OCI-LY7 (cell line): ENCODE measurements at regions of chr1 and their contacts with region 1.

Region 1: GRCh38 chr1:46254668-46255067 is 7.1 kb downstream of the RAD54L start:
- DNase-seq: no peak
- H3K4me3 ChIP-seq: no peak overlapping the region
- H3K27ac ChIP-seq: no peak overlapping the region
- H3K4me1 ChIP-seq: peaks cover 2% of the 10 kb centered on the region
- CTCF ChIP-seq: no peak

Region 2: GRCh38 chr1:46197964-46198811 is 56.5 kb before region 1 on chr1 and contains the start of gene POMGNT1:
- CTCF ChIA-PET with region 1: no interaction called
- POLR2A ChIA-PET with region 1: no interaction called
- intact Hi-C with region 1: no loop called
- DNase-seq: peak; percentile 76
- H3K4me3 ChIP-seq: peak within 1 kb of the TSS; percentile 70
- H3K27ac ChIP-seq: peak within 1 kb of the TSS; percentile 57
- H3K4me1 ChIP-seq: peaks cover 25% of the 10 kb centered on the region
- CTCF ChIP-seq: peak; percentile 69
- total RNA-seq, gene POMGNT1: 26.8 and 37.3 TPM in 2 replicates

Region 3: GRCh38 chr1:46274223-46275029 is 19.8 kb after region 1 on chr1:
- CTCF ChIA-PET with region 1: interaction called, 4 read pairs
- POLR2A ChIA-PET with region 1: interaction called, 12 read pairs
- intact Hi-C with region 1: no loop called
- DNase-seq: no peak
- H3K4me3 ChIP-seq: no peak overlapping the region
- H3K27ac ChIP-seq: no peak overlapping the region
- H3K4me1 ChIP-seq: no peaks in the 10 kb centered on the region
- CTCF ChIP-seq: no peak